Naive thymus-derived CD8-positive, alpha-beta T cell (primary cell): ENCODE measurements at regions of chr19 and their contacts with region 1.

Region 1: GRCh38 chr19:6737284-6738046 is at the start of gene GPR108:
- DNase-seq: peak; percentile 97 to 100 (median 99)
- ATAC-seq: peak; percentile 82 to 84
- H3K4me3 Mint-ChIP-seq: peak within 1 kb of the TSS; percentile 89 to 100 (median 96)
- H3K27ac Mint-ChIP-seq: peak within 1 kb of the TSS; percentile 93 to 99 (median 97)
- H3K4me1 Mint-ChIP-seq: peaks cover 19 to 48% (median 44%) of the 10 kb centered on the region in 4 donors
- H3K27me3 Mint-ChIP-seq: no peaks in the 10 kb centered on the region
- polyA plus RNA-seq, gene GPR108: 51.0 to 77.1 (median 58.0) TPM

Region 2: DNA sequence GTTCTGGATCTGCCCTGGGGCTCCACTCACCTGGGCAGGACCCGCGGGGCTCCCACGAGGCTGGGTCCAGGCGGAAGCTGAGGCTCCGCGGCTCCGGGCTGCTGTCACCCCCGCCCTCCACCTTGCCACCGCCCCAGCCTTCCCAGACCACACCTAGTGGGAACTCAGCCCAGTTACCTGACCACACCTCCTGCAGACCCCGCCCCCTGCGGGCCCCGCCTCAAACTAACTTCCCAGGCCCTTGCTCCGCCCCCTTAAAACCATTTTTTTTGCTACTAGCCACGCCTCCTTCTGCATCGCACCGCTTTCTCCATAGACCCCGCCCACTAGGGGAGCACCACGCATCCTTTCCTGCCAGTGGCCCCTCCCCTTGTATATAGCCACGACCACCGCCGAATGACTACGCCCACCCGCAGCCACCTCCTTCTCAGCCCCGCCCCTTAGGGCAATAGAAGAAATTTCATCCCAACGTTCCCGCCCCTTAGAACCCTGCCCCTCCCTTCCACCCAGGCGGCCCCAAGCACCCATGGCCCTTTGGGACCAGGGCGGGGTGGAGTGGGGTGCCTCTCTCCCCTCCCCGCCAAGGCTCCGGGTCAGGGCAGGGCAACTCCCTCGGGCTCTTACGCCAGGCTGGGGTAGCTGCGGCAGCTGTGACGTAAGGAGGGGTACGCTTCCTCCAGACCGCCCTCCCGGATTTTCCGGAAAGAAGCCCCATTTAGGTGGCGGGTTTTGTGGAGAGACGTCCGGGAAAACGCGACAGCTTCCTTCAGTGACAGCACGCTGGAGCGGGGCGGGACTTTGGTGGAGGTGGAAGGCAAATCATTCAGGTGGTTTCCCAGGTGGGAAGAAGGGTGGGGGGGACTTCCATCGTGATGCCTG is 30.1 kb after region 1 on chr19 and contains the start of gene SH2D3A:
- POLR2A ChIA-PET with region 1: interaction called, 19 read pairs
- DNase-seq: peak; percentile 89 to 98 (median 96)
- ATAC-seq: peak; percentile 79 to 80
- H3K4me3 Mint-ChIP-seq: peak within 1 kb of the TSS; percentile 88 to 99 (median 96)
- H3K27ac Mint-ChIP-seq: peak within 1 kb of the TSS; percentile 89 to 99 (median 97)
- H3K4me1 Mint-ChIP-seq: peaks cover 25 to 61% (median 40%) of the 10 kb centered on the region in 4 donors
- H3K27me3 Mint-ChIP-seq: no peaks in the 10 kb centered on the region
- polyA plus RNA-seq, gene SH2D3A: 23.0 to 47.3 (median 35.7) TPM

Region 3: DNA sequence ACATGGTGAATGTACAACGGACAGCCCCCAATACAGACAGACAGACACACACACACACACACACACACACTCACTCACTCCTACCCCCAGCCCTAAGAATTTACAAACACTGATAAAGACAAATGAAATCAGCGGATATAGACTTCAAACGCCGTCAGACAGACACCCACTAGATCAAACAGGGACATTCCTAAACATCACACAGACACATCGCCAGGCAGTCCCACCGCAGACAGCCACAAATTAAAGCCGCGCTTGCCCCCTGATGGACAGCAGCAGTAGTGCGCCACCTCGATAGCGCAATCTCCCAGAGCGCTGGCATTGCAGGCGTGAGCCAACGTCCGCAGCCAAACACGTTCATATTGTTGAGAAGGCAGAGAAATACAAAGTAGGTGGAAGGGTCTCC is 125.2 kb after region 1 on chr19:
- POLR2A ChIA-PET with region 1: interaction called, 81 read pairs
- DNase-seq: peak; percentile 78 to 94 (median 89)
- ATAC-seq: peak; percentile 88 to 94
- H3K4me3 Mint-ChIP-seq: peak overlapping the region; percentile 80 to 95 (median 86)
- H3K27ac Mint-ChIP-seq: peak overlapping the region; percentile 63 to 98 (median 90)
- H3K4me1 Mint-ChIP-seq: peaks cover 14 to 31% (median 24%) of the 10 kb centered on the region in 4 donors
- H3K27me3 Mint-ChIP-seq: peaks cover 0 to 1% (median 0%) of the 10 kb centered on the region in 5 donors